AG04450 (cell line): ENCODE measurements at regions of chr3 and their contacts with region 1.

Region 1: DNA sequence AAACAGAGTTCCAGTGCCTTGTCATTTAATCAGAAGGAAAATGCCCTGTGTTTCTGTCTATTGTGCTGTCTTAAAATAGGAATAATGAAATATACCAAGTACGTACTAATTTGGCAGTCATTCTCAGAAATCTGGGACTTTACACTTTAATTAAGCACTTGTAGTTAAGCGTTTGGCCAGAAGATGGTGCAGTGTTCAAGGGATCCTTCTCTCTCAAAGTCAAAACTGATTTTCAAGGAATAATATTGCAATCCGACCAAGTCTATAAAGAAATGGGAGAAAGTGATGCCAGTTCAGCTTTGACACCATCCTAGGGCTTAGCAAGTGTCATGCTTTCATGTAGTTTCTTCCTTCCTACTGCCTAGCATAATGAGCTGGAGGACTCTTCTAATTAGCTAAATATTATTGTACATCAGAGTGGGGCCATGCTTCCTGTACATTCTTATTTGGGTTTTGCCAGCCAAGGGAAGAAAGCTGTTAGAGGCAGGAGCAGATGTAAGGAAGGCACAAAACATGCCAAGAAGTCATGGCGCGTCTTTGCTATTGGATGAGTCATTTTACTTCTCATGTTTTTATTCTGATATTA is 64.8 kb downstream of the SAMMSON start:
- DNase-seq: peak; percentile 7
- H3K4me3 ChIP-seq: no peak overlapping the region
- H3K27ac ChIP-seq: no peak overlapping the region
- H3K27me3 ChIP-seq: peaks cover 6% of the 10 kb centered on the region
- CTCF ChIP-seq: peak; percentile 72

Region 2: DNA sequence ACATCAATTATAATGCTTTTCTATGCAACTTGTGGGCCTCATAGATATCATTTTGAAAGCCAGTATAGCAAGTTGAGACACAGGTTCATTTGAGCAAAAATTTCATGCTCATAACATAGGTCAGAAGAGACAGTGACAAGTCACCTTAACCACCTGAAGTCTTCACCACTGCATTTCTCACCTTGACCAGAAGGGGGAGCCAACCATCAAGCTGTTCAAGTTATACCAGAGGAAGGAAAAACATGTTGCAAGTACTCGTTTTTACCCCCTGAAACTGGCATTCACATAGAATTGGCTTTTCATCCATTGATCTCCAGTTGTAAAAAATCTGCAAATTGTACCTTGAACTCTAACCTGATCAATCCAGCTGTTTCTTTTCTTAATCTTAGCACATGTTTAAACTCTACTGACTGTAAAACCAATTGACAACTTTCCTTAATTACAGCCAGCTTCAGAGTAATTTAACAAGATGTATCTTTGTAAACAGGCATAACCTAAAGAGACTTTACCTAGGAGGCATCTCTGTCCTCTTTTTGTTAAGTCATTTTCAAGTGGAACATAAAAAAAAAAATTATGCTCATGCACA is 943.3 kb before region 1 on chr3:
- CTCF ChIA-PET with region 1: no interaction called
- POLR2A ChIA-PET with region 1: no interaction called
- DNase-seq: peak; percentile 27
- H3K4me3 ChIP-seq: no peak overlapping the region
- H3K27ac ChIP-seq: no peak overlapping the region
- H3K27me3 ChIP-seq: peaks cover 2% of the 10 kb centered on the region
- CTCF ChIP-seq: peak; percentile 99

Region 3: DNA sequence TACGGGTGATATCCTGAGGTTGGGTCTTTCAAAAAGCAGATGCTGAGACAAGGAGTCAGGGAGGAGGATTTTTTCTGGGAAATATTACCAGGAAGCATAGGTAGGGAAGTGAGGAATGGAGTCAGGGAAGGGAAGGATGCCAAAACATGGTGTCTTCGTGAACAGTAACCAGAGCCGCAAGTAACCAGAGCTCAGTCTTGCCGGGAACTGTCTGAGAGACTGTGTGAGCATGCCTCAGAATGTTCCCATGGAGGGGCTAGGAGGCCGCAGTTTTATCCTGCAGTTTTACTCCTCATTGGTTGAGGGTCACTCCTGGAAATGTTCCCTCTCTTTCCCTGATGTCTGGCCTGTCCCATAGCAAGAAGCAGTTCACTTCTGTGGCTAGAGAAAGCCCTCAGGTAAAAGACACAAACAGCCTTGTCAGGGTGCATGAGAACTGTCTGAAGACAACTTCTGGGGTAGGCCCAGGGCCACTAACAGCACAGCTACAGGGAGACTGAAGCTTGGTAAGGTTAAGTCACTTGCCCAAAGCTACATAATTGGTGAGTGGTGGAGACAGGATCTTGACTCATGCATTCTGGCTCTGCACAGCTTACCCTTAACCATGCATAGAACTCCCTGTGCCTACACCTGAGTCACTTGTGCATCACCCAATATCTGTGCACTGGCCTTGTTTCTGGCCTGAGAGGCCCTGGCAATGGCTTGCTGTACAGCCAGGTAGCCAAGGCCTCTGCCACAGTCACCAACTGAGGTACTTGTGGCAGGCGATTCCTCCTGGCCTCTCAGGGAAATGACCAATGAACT is 602.1 kb before region 1 on chr3:
- CTCF ChIA-PET with region 1: no interaction called
- POLR2A ChIA-PET with region 1: no interaction called
- DNase-seq: no peak
- H3K4me3 ChIP-seq: no peak overlapping the region
- H3K27ac ChIP-seq: no peak overlapping the region
- H3K27me3 ChIP-seq: no peaks in the 10 kb centered on the region
- CTCF ChIP-seq: no peak

Region 4: DNA sequence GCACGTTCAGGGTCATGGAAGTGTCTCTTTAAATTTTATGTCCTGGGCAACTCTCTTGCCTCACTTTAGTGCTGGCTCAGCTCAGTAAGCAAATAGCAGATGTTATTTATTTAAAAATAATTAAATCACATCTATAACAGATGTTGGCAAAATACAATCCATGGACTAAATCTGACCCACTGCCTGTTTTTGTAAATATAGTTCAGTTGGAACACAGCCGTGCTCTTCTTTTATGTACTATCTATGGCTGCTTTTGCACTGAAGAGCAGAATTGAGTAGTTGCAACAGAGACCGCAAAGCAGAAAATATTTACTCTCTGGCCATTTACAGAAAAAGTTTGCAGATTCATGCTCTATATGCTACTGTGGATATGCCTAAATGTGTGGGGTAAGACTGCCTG is 14.5 kb after region 1 on chr3:
- CTCF ChIA-PET with region 1: interaction called, 13 read pairs
- POLR2A ChIA-PET with region 1: no interaction called
- DNase-seq: no peak
- H3K4me3 ChIP-seq: no peak overlapping the region
- H3K27ac ChIP-seq: no peak overlapping the region
- H3K27me3 ChIP-seq: peaks cover 7% of the 10 kb centered on the region
- CTCF ChIP-seq: no peak

Region 5: GRCh38 chr3:70108072-70108471 is 43.8 kb after region 1 on chr3:
- CTCF ChIA-PET with region 1: interaction called, 12 read pairs
- POLR2A ChIA-PET with region 1: no interaction called
- DNase-seq: no peak
- H3K4me3 ChIP-seq: no peak overlapping the region
- H3K27ac ChIP-seq: no peak overlapping the region
- H3K27me3 ChIP-seq: no peaks in the 10 kb centered on the region
- CTCF ChIP-seq: peak; percentile 61

Region 6: GRCh38 chr3:70358978-70359580 is 294.8 kb after region 1 on chr3:
- CTCF ChIA-PET with region 1: interaction called, 38 read pairs
- POLR2A ChIA-PET with region 1: no interaction called
- DNase-seq: peak; percentile 11
- H3K4me3 ChIP-seq: no peak overlapping the region
- H3K27ac ChIP-seq: no peak overlapping the region
- H3K27me3 ChIP-seq: no peaks in the 10 kb centered on the region
- CTCF ChIP-seq: peak; percentile 75

Region 7: DNA sequence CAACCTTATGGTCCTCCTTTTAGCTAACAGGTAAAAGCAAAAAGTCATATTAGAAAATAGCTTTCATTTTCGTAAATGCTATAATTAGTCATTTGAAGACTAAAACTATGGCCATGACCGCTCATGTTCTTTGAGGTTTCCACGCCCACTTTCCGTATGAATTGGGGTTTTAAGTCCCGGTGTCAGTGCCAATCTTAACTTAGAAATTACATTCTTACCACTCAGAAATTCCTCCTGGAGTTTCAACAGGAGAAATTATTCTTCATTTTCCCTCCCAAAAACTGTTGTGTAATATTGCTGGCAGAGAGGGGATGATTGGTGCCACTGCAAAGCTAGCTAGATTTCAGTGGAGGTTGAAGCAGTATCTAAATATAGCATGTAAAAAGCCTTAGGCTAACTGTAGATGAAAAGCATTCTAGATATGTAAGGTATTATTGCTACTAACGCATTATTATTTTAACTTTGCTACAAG is 319.1 kb after region 1 on chr3:
- CTCF ChIA-PET with region 1: no interaction called
- POLR2A ChIA-PET with region 1: no interaction called
- DNase-seq: no peak
- H3K4me3 ChIP-seq: no peak overlapping the region
- H3K27ac ChIP-seq: no peak overlapping the region
- H3K27me3 ChIP-seq: no peaks in the 10 kb centered on the region
- CTCF ChIP-seq: no peak

Region 8: DNA sequence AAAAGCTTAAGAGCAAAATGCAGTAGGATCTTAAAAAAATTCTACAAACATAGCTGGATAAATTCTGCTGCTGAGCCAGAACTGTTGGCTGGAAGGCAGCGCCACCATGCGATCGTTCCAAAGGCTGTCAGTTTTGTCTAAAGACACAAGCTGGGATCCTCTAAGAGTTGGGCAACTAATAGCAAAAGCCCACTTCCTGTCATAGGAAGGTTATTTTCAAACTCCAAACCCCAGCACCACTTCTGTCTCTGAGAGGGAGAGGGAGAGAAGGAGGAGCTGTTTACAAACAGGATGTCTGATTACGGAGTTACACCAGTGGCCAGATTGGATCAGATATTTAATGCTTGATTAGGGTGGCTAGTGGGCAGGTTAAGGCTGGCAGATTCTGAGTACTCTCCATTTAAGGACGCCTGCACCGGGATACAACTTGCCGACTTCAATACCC is 1617.0 kb after region 1 on chr3:
- CTCF ChIA-PET with region 1: interaction called, 11 read pairs
- POLR2A ChIA-PET with region 1: no interaction called
- DNase-seq: peak; percentile 47
- H3K4me3 ChIP-seq: no peak overlapping the region
- H3K27ac ChIP-seq: no peak overlapping the region
- H3K27me3 ChIP-seq: no peaks in the 10 kb centered on the region
- CTCF ChIP-seq: peak; percentile 91